CD4-positive, alpha-beta memory T cell (primary cell): ENCODE measurements at regions of chr11 and their contacts with region 1.

Region 1: DNA sequence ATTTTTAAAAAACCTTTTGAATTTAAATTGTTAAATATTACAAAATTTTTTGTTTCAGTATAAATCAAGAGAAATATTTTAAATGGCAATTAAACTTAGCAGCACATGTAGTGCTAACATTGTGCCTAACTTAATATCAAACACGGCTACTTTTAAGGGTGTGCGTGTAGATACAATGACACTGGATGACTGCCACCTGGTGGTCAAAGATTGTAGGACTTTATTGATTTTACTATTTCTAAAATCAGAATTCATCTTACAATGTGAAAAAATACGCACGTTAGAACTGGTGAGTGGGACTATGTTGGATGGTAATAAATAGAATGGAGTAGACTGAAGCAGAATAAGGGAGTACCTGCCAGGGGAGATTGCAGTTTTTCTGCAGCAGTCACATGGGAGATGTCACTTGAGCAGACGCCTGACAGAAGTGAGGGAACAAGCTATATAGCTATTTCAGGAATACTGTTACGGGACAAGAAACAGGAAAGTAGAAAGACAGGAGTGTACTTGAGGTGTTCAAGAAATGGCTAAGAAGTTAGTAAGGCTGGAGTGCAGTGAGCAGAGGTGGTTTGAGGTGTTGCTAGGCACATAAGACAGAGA is 52.9 kb downstream of the UVRAG start:
- DNase-seq: peak in 4 of 5 donors; percentile 47 to 53 (median 48)
- H3K4me3 ChIP-seq: no peak overlapping the region
- H3K4me3 Mint-ChIP-seq: no peak overlapping the region
- H3K27ac ChIP-seq: no peak overlapping the region
- H3K27ac Mint-ChIP-seq: peak overlapping the region in 2 of 7 donors; percentile 12 to 44
- H3K4me1 ChIP-seq: no peaks in the 10 kb centered on the region
- H3K4me1 Mint-ChIP-seq: peaks cover 0 to 7% (median 5%) of the 10 kb centered on the region in 4 donors
- H3K27me3 ChIP-seq: no peaks in the 10 kb centered on the region
- H3K27me3 Mint-ChIP-seq: no peaks in the 10 kb centered on the region

Region 2: DNA sequence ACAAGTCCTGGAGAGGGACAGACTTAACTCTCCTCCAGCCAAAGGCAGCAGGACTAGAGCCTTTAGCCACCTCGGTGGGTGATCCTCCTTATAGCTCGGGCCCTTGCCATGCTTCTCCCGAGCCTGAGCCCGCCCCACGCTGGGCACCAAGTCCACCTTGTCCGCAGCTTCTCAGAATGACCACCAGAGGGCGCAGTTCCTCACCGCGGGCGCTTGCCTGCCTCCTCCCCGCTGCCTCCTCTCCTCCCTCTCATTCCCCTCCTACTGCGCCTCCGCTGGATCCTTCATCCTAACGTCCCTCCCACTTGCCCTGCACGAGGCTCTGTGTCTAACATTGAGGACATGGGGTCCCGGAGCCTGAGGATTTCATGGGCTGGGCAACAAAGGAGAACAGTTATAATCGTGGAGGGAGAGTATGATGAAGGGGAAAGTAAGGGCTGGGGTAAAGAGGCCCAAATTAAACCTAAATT is 161.6 kb before region 1 on chr11:
- CTCF ChIA-PET with region 1: interaction called, 4 read pairs
- POLR2A ChIA-PET with region 1: no interaction called
- intact Hi-C with region 1: loop called (anchors 1 kb)
- DNase-seq: peak; percentile 47 to 59 (median 57)
- H3K4me3 ChIP-seq: no peak overlapping the region
- H3K4me3 Mint-ChIP-seq: peak overlapping the region in 4 of 8 donors; percentile 5 to 52 (median 49)
- H3K27ac ChIP-seq: no peak overlapping the region
- H3K27ac Mint-ChIP-seq: no peak overlapping the region
- H3K4me1 ChIP-seq: no peaks in the 10 kb centered on the region
- H3K4me1 Mint-ChIP-seq: peaks cover 0 to 11% (median 4%) of the 10 kb centered on the region in 4 donors
- H3K27me3 ChIP-seq: no peaks in the 10 kb centered on the region
- H3K27me3 Mint-ChIP-seq: peaks cover 2 to 10% of the 10 kb centered on the region in 2 donors

Region 3: DNA sequence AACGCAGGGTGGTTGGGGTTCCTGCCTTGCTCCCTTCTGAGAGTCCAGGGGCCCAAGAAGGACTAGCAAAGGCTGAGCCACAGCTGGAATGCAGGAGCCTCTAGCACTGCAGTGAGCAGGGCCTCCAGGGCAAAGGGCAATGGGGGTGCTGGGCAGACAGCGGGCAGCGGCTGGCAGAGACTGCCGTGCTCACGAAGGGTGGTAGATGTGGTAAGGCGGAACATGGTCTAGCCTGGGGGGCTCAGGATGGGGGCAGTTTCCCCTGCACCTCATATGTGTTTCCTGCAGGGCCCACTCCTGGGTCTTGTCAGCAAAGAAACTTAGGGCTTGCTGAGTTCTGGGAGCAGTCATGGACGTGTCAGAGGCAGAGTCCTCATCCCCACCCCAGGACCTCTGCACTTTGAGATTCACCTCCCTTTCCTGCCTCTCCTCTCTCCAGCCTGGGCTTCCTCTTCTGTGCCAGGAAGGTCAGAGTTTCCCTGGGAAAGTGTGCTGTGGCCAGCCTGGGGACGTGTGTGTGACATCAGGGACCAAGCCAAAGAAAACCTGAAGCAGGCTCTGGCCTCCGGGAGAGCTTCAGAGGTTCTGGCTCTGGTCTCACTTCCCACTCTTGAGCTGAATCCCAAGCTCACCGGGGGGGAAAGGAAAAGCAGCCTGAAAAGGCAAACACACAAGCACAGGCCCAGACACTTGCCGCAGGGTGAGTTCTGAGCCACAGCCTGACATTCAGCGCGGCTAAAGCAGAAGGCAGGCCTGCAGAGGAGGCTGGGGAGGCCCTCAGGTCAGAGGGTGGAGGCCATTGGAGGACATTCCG is 145.8 kb before region 1 on chr11:
- CTCF ChIA-PET with region 1: interaction called, 23 read pairs
- POLR2A ChIA-PET with region 1: no interaction called
- intact Hi-C with region 1: loop called (anchors 1 kb)
- DNase-seq: no peak
- H3K4me3 ChIP-seq: no peak overlapping the region
- H3K4me3 Mint-ChIP-seq: no peak overlapping the region
- H3K27ac ChIP-seq: no peak overlapping the region
- H3K27ac Mint-ChIP-seq: peak overlapping the region in 1 of 7 donors; percentile 60
- H3K4me1 ChIP-seq: no peaks in the 10 kb centered on the region
- H3K4me1 Mint-ChIP-seq: no peaks in the 10 kb centered on the region
- H3K27me3 ChIP-seq: no peaks in the 10 kb centered on the region
- H3K27me3 Mint-ChIP-seq: no peaks in the 10 kb centered on the region

Region 4: DNA sequence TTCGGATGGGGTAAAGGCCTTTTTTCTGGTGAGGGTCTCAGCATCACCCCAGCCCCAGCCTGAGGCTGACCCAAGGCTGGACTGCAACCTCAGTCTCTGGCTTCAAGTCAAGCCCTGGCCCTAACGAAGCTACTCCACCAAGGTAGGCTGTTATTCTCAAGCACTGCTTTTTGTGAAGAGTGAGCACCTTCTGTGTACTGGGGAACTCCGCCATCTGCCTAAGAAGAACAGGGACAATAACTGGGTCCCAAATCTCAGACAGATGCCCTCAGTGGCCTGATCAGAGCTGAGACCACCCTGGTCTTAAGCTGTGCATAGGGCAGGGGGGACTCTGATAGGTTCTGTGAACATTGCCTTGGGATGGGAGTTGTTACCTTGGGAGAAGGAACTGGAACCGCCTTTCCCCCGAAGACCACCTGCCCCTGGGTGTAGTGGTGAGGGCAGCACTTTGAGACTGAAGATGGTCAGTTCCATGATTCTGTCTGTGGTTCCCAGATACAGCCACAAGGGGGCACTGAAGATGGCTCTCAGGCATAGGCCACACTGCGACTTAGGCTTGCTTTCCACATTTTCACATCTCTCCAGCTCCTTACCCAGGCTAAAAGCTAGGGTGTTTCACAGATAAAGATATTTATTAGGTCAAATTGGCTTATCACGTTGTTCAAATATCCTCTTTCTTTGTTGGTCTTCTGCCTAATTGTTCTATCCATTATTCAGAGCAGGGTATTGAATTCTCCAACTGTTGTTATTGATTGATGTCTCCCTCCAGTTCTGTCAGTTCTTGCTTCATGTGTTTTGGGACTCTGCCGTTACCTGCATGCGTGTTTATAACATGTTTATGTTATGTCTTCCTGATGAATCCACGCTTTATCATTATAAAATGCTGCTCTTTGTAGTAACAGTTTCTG is 64.7 kb before region 1 on chr11:
- CTCF ChIA-PET with region 1: interaction called, 229 read pairs
- POLR2A ChIA-PET with region 1: interaction called, 8 read pairs
- intact Hi-C with region 1: loop called (anchors 1 kb)
- DNase-seq: peak; percentile 59 to 68 (median 61)
- H3K4me3 ChIP-seq: no peak overlapping the region
- H3K4me3 Mint-ChIP-seq: no peak overlapping the region
- H3K27ac ChIP-seq: no peak overlapping the region
- H3K27ac Mint-ChIP-seq: peak overlapping the region in 2 of 7 donors; percentile 23 to 44
- H3K4me1 ChIP-seq: peaks cover 20% of the 10 kb centered on the region
- H3K4me1 Mint-ChIP-seq: peaks cover 9 to 35% (median 20%) of the 10 kb centered on the region in 4 donors
- H3K27me3 ChIP-seq: no peaks in the 10 kb centered on the region
- H3K27me3 Mint-ChIP-seq: no peaks in the 10 kb centered on the region

Region 5: GRCh38 chr11:75823415-75824345 is 44.2 kb before region 1 on chr11:
- CTCF ChIA-PET with region 1: interaction called, 13 read pairs
- POLR2A ChIA-PET with region 1: no interaction called
- intact Hi-C with region 1: loop called (anchors 5 kb)
- DNase-seq: no peak
- H3K4me3 ChIP-seq: no peak overlapping the region
- H3K4me3 Mint-ChIP-seq: peak overlapping the region in 5 of 8 donors; percentile 12 to 76 (median 36)
- H3K27ac ChIP-seq: no peak overlapping the region
- H3K27ac Mint-ChIP-seq: peak overlapping the region in 4 of 7 donors; percentile 6 to 87 (median 48)
- H3K4me1 ChIP-seq: peaks cover 27% of the 10 kb centered on the region
- H3K4me1 Mint-ChIP-seq: peaks cover 27 to 51% (median 37%) of the 10 kb centered on the region in 4 donors
- H3K27me3 ChIP-seq: no peaks in the 10 kb centered on the region
- H3K27me3 Mint-ChIP-seq: no peaks in the 10 kb centered on the region

Region 6: DNA sequence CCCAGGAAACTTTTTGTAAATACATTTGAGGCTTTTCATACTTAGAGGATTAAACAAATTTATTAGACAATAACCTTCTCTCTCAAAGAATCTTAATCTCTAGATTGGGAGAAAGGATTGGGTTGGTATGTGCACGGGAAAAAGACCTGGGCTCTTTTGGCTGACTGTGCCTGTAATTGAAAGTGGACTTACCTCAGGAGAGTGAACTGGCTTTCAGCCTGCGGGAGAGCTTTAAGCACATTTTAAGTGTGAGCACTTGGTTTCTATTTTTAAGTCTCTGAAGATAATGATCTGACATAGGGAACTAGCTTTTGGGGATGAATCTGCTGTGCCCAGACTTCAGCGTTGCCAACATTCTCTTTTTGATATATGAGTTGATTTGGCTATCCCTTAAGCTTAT is 17.1 kb before region 1 on chr11:
- CTCF ChIA-PET with region 1: interaction called, 22 read pairs
- POLR2A ChIA-PET with region 1: no interaction called
- intact Hi-C with region 1: no loop called
- DNase-seq: no peak
- H3K4me3 ChIP-seq: no peak overlapping the region
- H3K4me3 Mint-ChIP-seq: no peak overlapping the region
- H3K27ac ChIP-seq: no peak overlapping the region
- H3K27ac Mint-ChIP-seq: peak overlapping the region in 4 of 7 donors; percentile 12 to 72 (median 41)
- H3K4me1 ChIP-seq: peaks cover 14% of the 10 kb centered on the region
- H3K4me1 Mint-ChIP-seq: peaks cover 19 to 36% (median 26%) of the 10 kb centered on the region in 4 donors
- H3K27me3 ChIP-seq: no peaks in the 10 kb centered on the region
- H3K27me3 Mint-ChIP-seq: no peaks in the 10 kb centered on the region